ENCODE measurements at regions of chr13 and their contacts with region 1.

Region 1: GRCh38 chr13:34076943-34077703 is 259.2 kb downstream of the RFC3 start:
- DNase-seq: no peak
- ATAC-seq: peak; percentile 63 to 76 (median 70)
- H3K4me3 ChIP-seq: no peak overlapping the region
- H3K27ac ChIP-seq: no peak overlapping the region
- H3K4me1 ChIP-seq: no peaks in the 10 kb centered on the region
- H3K27me3 ChIP-seq: no peaks in the 10 kb centered on the region
- CTCF ChIP-seq: peak; percentile 60 to 79 (median 71)
- POLR2A ChIP-seq: no peak

Region 2: DNA sequence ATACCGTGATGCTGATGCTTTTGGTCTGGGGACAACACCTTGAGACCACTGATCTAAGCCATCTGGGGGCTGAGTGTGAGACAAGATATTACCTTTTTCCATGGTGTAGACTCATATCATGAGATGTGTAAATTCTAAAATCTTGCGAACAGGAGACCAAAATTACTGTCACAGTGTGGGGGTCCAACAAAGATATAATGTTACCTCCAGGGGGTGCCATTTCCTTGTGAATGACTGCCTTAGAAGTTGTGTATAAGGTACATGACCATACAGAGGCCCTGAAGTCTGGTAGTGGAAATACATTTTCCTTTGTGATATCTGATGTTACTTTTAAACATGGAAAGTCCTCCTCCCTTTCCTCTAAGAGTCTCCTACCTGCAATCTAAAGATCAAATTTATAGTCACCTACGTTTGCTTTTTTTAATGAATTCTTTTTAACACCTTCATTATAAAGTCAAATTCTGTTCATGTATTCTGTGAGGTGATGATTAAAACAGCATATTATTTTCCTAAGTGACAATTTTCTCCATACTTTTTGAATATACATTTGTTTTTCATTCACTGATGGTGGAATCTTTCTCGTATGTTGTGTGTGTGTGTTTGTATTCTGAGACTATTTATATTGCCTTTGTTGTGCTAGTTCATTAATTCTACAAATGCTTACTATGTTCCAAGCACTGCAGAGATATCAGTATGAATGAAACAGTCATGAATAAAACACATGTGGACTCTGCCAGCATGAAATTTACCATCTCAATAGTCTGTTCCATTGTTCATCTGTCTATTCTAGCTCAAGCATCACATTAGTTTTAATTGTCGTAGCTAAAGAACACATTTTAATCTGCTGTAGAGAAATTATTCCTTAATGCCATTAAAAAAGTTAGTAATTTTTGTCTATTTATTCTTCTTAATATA is 145.5 kb before region 1 on chr13:
- intact Hi-C with region 1: loop called (anchors 5 kb)
- DNase-seq: no peak
- ATAC-seq: peak; percentile 87 to 92 (median 89)
- H3K4me3 ChIP-seq: no peak overlapping the region
- H3K27ac ChIP-seq: no peak overlapping the region
- H3K4me1 ChIP-seq: peaks cover 0 to 6% (median under 1%) of the 10 kb centered on the region in 4 donors
- H3K27me3 ChIP-seq: no peaks in the 10 kb centered on the region
- CTCF ChIP-seq: peak; percentile 51 to 82 (median 62)
- POLR2A ChIP-seq: no peak

Measured in right lobe of liver (tissue), 6 donors.